ENCODE measurements at regions of chr1 and their contacts with region 1.

Region 1: DNA sequence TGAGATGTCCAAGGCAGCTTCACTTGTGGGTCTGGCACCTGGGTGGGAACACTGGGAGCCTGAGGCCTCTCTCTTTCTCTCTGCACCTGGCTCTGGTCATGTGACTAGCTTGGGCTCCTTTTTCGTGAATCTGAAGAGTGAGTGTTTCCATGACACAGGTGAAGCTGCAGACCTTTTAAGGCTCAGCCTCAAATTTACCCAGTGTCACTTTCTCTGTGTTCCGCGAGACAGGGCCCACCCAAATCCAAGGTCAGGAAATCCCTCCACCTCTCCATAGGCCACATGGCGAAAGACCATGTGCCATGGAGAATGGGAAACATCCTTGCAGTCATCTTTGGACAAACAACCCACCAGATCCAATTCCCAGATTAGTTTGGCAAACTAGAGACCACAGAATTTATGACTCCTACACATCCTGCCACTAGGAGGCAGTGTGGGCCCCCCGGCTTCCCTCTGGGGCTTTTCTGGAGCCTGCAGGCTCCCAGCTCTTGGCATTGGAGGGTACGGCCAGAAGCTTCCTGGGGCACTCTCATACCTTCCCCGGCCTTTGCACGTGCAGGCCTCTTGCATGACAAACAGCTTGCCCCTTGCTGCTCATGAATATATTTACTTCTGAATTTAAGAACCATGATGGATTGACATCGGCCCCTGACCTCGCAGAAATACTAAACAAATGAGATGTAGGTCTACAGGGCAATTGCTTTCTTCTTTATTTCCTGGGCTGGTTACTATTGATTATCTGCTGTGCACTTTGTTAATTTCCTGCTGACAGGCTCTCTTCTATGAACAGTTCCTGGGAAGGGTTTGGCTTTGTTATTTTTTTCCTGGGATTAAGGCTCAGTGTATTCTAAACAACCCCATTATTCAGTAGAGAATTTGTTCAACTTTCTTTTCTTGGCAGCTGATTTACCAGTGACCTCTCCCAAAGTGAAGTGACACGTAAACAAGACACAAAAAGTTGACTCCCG is 180.7 kb downstream of the KAZN start:
- DNase-seq: peak; percentile 17 to 67 (median 34)
- H3K4me3 ChIP-seq: no peak overlapping the region
- H3K27ac ChIP-seq: no peak overlapping the region
- H3K4me1 ChIP-seq: no peaks in the 10 kb centered on the region
- H3K27me3 ChIP-seq: no peaks in the 10 kb centered on the region
- CTCF ChIP-seq: peak; percentile 30 to 62 (median 57)
- POLR2A ChIP-seq: no peak

Region 2: DNA sequence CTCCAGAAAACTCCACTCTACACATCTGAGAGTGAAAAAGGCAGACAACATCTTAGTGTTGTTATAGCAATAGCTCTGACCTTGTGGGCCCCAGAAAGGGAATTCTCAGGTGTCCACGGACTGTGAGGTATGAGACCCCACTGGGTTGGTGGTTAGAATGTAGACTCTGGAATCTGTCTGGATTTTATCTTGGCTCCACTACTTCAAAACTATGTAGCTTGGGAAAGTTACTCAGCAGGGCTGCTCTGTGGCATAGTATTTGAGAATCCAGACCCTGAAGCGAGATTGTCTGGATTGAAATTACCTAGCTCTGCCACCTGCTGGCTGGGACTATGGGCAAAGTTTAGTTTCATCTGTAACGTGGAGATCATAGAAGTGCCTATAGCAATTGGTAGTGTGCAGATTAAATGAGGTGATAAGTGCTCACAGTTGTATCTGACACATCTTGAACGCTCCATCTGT is 1053.4 kb before region 1 on chr1:
- intact Hi-C with region 1: no loop called
- DNase-seq: peak; percentile 30 to 70 (median 39)
- H3K4me3 ChIP-seq: no peak overlapping the region
- H3K27ac ChIP-seq: no peak overlapping the region
- H3K4me1 ChIP-seq: peaks cover 0 to 3% of the 10 kb centered on the region in 2 donors
- H3K27me3 ChIP-seq: no peaks in the 10 kb centered on the region
- CTCF ChIP-seq: peak in 5 of 6 experiments; percentile 44 to 56 (median 52)
- POLR2A ChIP-seq: no peak

Region 3: GRCh38 chr1:15046487-15047165 is 267.4 kb after region 1 on chr1:
- intact Hi-C with region 1: loop called (anchors 5 kb)
- DNase-seq: peak; percentile 77 to 90 (median 84)
- H3K4me3 ChIP-seq: no peak overlapping the region
- H3K27ac ChIP-seq: no peak overlapping the region
- H3K4me1 ChIP-seq: peaks cover 9 to 11% of the 10 kb centered on the region in 2 donors
- H3K27me3 ChIP-seq: no peaks in the 10 kb centered on the region
- CTCF ChIP-seq: peak; percentile 83 to 94 (median 91)
- POLR2A ChIP-seq: no peak

Region 4: DNA sequence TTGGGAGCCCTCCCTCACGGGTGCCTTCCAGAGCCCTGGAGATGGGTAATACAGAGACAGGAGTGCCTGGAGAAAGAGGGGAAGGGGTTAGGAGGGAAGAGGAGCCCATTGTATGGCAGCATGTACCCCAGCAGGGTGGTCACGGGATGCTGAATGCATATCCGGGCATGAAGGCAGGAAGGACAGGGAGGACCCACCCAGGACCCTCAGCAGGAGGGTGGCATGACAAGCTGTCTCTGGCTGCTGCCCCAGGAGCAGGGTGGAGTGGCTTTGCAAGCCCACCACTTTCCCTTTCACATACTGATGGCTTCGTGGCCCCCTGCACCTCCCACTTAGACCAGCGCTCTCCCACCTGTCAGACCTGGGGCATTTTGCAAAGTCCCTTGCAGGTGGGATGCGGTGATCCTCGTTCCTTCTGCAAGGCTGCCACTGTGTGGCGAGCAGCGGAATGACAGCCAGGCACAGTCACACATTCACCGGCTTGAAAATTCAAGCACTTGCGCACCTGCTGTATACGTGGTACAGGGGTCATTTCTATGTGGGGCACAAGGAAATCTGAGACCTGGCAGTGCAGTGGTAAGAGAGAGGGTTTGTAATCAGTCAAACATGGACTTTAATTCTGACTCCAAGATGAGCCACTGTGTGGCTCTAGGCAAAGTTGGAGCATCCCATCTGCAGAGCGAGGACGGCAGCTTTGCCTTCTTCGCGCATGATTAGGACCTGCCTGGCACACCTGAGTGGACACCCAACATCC is 321.1 kb after region 1 on chr1:
- intact Hi-C with region 1: loop called in 1 of 2 experiments (anchors 10 kb)
- DNase-seq: peak in 5 of 7 donors; percentile 45 to 66 (median 56)
- H3K4me3 ChIP-seq: no peak overlapping the region
- H3K27ac ChIP-seq: no peak overlapping the region
- H3K4me1 ChIP-seq: no peaks in the 10 kb centered on the region
- H3K27me3 ChIP-seq: peaks cover 3% of the 10 kb centered on the region
- CTCF ChIP-seq: peak; percentile 83 to 93 (median 92)
- POLR2A ChIP-seq: no peak